Heart right ventricle (tissue), 16 donors: ENCODE measurements at regions of chr9 and their contacts with region 1.

Region 1: GRCh38 chr9:19689328-19690101 is 99.3 kb downstream of the SLC24A2 start:
- DNase-seq: no peak
- ATAC-seq: no peak
- H3K4me3 ChIP-seq: no peak overlapping the region
- H3K27ac ChIP-seq: no peak overlapping the region
- H3K4me1 ChIP-seq: no peaks in the 10 kb centered on the region
- H3K27me3 ChIP-seq: no peaks in the 10 kb centered on the region
- CTCF ChIP-seq: no peak

Region 2: DNA sequence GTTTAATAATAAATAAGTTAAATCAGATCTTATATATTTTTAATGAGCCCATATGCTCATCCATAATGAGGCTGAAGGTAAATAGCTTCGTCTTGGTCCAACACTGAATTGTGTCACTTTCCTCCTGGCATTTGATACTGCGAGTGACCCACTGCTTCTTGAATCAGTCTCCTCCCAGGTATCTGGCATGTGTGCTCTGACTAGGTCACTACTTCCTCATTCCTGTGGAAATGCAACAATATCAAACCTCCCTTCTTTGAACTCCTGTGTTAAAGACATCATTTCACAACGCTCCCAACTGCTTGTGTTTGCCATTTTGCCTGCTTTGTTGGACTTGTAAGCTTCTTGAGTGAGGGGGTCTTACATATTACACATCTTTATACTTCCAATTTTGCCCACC is 58.3 kb before region 1 on chr9:
- intact Hi-C with region 1: loop called in 1 of 10 experiments (anchors 10 kb)
- DNase-seq: no peak
- ATAC-seq: no peak
- H3K4me3 ChIP-seq: no peak overlapping the region
- H3K27ac ChIP-seq: no peak overlapping the region
- H3K4me1 ChIP-seq: peaks cover 0 to 4% (median 0%) of the 10 kb centered on the region in 9 donors
- H3K27me3 ChIP-seq: peaks cover 0 to 2% (median 0%) of the 10 kb centered on the region in 7 donors
- CTCF ChIP-seq: no peak

Region 3: GRCh38 chr9:19641046-19641445 is 48.5 kb before region 1 on chr9:
- intact Hi-C with region 1: loop called in 2 of 10 experiments (anchors 10 kb)
- DNase-seq: no peak
- ATAC-seq: no peak
- H3K4me3 ChIP-seq: no peak overlapping the region
- H3K27ac ChIP-seq: no peak overlapping the region
- H3K4me1 ChIP-seq: no peaks in the 10 kb centered on the region
- H3K27me3 ChIP-seq: no peaks in the 10 kb centered on the region
- CTCF ChIP-seq: no peak